AG04449 (cell line): ENCODE measurements at regions of chr10 and their contacts with region 1.

Region 1: DNA sequence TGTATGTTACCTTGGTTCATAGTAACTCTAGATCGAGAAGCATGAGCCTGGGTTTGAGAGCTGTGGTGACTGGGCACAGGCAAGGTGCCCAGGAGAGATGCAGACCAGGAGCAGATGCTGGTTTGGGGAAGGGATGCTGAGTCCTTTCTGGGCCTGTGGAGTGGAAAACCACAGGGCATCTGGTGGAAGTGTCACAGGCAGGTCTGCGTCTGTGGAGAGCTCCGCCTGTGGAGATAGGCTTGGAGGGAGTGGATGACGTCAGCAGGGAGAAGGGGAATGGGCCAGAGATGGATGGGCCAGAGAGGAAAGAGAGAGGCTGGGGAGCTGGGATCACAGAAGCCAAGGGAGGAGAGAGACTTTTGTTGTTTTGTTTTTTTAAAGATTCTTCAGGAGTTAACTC is 14.8 kb downstream of the CYP26A1 start:
- DNase-seq: no peak
- H3K4me3 ChIP-seq: no peak overlapping the region
- CTCF ChIP-seq: no peak

Region 2: GRCh38 chr10:93074147-93074596 is 14.3 kb before region 1 on chr10:
- CTCF ChIA-PET with region 1: interaction called, 16 read pairs
- POLR2A ChIA-PET with region 1: no interaction called
- DNase-seq: no peak
- H3K4me3 ChIP-seq: peak overlapping the region; percentile 15; the same call in 1 of the 2 replicates
- CTCF ChIP-seq: no peak

Region 3: DNA sequence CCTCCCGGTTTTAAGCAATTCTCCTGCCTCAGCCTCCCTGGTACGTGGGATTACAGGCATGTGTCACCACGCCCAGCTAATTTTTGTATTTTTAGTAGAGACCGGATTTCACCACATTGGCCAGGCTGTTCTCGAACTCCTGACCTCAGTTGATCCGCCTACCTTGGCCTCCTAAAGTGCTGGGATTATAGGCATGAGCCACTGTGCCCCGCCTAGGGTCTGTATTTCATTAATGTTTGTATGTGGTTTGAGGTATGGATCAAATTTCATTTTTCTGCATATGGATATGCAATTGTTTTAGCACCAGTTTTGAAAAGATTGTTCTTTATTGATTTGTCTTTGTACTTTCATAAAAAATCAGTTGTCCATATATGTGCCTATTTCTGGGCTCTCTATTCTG is 11.2 kb after region 1 on chr10:
- CTCF ChIA-PET with region 1: no interaction called
- POLR2A ChIA-PET with region 1: no interaction called
- DNase-seq: no peak
- H3K4me3 ChIP-seq: no peak overlapping the region
- CTCF ChIP-seq: no peak